AG04450 (cell line): ENCODE measurements at regions of chr3 and their contacts with region 1.

Region 1: GRCh38 chr3:107846279-107846852 is 244.5 kb downstream of the CD47 start:
- DNase-seq: peak; percentile 21
- H3K4me3 ChIP-seq: no peak overlapping the region
- H3K27ac ChIP-seq: no peak overlapping the region
- H3K27me3 ChIP-seq: peaks cover 6% of the 10 kb centered on the region
- CTCF ChIP-seq: peak; percentile 72

Region 2: DNA sequence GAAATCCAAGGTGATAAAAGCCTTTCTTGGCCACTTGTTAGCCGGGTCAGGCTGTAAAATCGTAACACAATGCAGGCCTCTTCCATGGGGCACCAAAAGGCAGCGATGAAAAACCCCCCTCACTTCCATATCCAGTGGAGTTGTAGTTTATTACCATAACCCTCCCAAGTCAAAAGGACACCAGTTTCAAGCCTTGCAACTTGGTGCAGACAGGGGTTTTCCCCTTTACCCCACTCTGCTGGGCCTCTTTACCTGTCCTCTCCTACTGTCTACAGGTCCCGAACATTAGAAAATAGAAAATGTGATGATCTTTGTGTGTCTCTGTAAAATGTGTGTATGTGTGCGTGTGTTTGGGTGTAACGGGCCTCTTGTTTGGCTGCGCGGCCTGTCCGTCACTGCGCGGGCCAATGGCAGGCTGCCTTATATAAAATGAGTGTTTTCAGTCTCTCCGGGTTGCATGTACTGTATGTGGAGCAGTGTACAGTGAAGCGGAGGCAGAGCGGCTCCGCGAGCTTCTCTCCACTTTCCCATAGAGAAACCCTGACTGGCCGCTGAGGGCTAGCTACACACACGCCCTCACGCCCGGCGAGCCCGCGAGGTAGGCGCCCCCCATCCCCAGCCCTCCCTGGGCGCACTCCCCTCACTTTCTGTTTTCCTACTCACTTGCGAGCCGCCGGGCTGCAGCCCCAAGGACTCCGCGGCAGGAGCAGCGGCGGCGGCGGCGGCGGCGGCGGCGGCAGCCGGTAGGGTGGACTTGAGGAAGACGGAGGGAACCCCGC is 323.7 kb before region 1 on chr3 and contains the start of gene BBX:
- CTCF ChIA-PET with region 1: no interaction called
- POLR2A ChIA-PET with region 1: no interaction called
- DNase-seq: peak; percentile 95
- H3K4me3 ChIP-seq: peak within 1 kb of the TSS; percentile 82
- H3K27ac ChIP-seq: peak within 1 kb of the TSS; percentile 72
- H3K27me3 ChIP-seq: no peaks in the 10 kb centered on the region
- CTCF ChIP-seq: no peak
- polyA plus RNA-seq, gene BBX: 38.2 and 46.1 TPM in 2 replicates

Region 3: GRCh38 chr3:107574650-107575049 is 271.7 kb before region 1 on chr3:
- CTCF ChIA-PET with region 1: interaction called, 17 read pairs
- POLR2A ChIA-PET with region 1: no interaction called
- DNase-seq: peak; percentile 18
- H3K4me3 ChIP-seq: no peak overlapping the region
- H3K27ac ChIP-seq: no peak overlapping the region
- H3K27me3 ChIP-seq: no peaks in the 10 kb centered on the region
- CTCF ChIP-seq: peak; percentile 67

Region 4: GRCh38 chr3:107676469-107677309 is 169.7 kb before region 1 on chr3:
- CTCF ChIA-PET with region 1: interaction called, 64 read pairs
- POLR2A ChIA-PET with region 1: no interaction called
- DNase-seq: no peak
- H3K4me3 ChIP-seq: no peak overlapping the region
- H3K27ac ChIP-seq: no peak overlapping the region
- H3K27me3 ChIP-seq: no peaks in the 10 kb centered on the region
- CTCF ChIP-seq: peak; percentile 56

Region 5: GRCh38 chr3:107753480-107753879 is 92.9 kb before region 1 on chr3:
- CTCF ChIA-PET with region 1: interaction called, 10 read pairs
- POLR2A ChIA-PET with region 1: no interaction called
- DNase-seq: no peak
- H3K4me3 ChIP-seq: no peak overlapping the region
- H3K27ac ChIP-seq: no peak overlapping the region
- H3K27me3 ChIP-seq: no peaks in the 10 kb centered on the region
- CTCF ChIP-seq: peak; percentile 55

Region 6: GRCh38 chr3:107833043-107833442 is 13.3 kb before region 1 on chr3:
- CTCF ChIA-PET with region 1: interaction called, 27 read pairs
- POLR2A ChIA-PET with region 1: no interaction called
- DNase-seq: no peak
- H3K4me3 ChIP-seq: no peak overlapping the region
- H3K27ac ChIP-seq: no peak overlapping the region
- H3K27me3 ChIP-seq: no peaks in the 10 kb centered on the region
- CTCF ChIP-seq: no peak